Activated CD8-positive, alpha-beta T cell treated with anti-CD3 and anti-CD28 coated beads, Interleukin-2, amount 10 ng/mL, durations not matched to agents 7 days and 5 days (primary cell): ENCODE measurements at regions of chr21 and their contacts with region 1.

Region 1: GRCh38 chr21:37220981-37221664 is 46.0 kb downstream of the VPS26C start:
- DNase-seq: peak; percentile 96
- ATAC-seq: peak; percentile 81
- H3K4me3 Mint-ChIP-seq: peak overlapping the region; percentile 88
- H3K27ac Mint-ChIP-seq: peak overlapping the region; percentile 91
- H3K4me1 Mint-ChIP-seq: peaks cover 63% of the 10 kb centered on the region
- H3K27me3 Mint-ChIP-seq: no peaks in the 10 kb centered on the region

Region 2: GRCh38 chr21:37244501-37245083 is 23.5 kb after region 1 on chr21:
- CTCF ChIA-PET with region 1: interaction called, 10 read pairs
- POLR2A ChIA-PET with region 1: interaction called, 13 read pairs
- DNase-seq: peak; percentile 71
- ATAC-seq: peak; percentile 89
- H3K4me3 Mint-ChIP-seq: peak overlapping the region; percentile 78
- H3K27ac Mint-ChIP-seq: peak overlapping the region; percentile 94
- H3K4me1 Mint-ChIP-seq: peaks cover 88% of the 10 kb centered on the region
- H3K27me3 Mint-ChIP-seq: no peaks in the 10 kb centered on the region